Tibial artery (tissue), 4 donors: ENCODE measurements at regions of chr5 and their contacts with region 1.

Region 1: DNA sequence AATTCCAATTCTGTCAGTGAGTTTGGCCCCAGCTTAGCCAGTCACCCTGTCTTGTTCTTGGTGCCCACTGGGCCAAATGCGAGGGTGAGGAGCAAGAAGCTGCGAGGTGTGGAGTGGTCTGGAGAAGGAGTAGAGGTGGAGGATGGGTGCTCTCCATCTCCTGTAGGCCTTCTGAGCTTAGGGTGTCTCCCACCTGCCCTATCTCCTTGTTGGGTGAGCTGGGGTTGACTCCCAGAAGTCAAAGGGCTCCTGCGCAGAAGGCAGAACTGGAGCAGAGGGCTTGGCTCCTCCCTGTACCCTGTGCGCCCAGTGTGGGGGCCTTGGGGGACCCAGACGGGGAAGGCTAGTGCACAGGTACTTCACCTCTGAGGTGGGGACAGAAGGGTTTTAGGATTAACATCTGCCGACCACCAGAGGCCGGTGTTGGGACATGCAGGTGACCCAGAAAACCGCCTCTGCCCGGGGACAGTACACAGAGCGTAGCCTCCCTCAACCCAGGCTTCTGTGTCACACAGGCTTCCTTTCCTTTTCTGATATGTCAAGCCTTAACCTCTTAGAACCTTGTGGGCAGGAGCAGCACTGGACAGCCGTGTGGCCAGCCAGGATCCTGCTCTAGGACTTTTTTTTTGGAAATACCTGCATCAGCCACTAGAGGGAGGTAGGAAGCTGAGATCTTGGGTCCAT is 16.9 kb downstream of the IL5 start:
- DNase-seq: no peak
- H3K4me3 ChIP-seq: no peak overlapping the region
- H3K27ac ChIP-seq: no peak overlapping the region
- H3K4me1 ChIP-seq: peaks cover 0 to 6% (median 2%) of the 10 kb centered on the region in 4 donors
- H3K27me3 ChIP-seq: no peaks in the 10 kb centered on the region
- CTCF ChIP-seq: peak; percentile 76 to 84

Region 2: GRCh38 chr5:132437604-132438266 is 88.7 kb before region 1 on chr5:
- intact Hi-C with region 1: no loop called
- DNase-seq: peak; percentile 84
- H3K4me3 ChIP-seq: no peak overlapping the region
- H3K27ac ChIP-seq: peak overlapping the region; percentile 50 to 68
- H3K4me1 ChIP-seq: peaks cover 0 to 65% (median 35%) of the 10 kb centered on the region in 4 donors
- H3K27me3 ChIP-seq: no peaks in the 10 kb centered on the region
- CTCF ChIP-seq: no peak

Region 3: GRCh38 chr5:132674671-132675506 is 148.5 kb after region 1 on chr5:
- intact Hi-C with region 1: loop called (anchors 10 kb)
- DNase-seq: peak in 1 of 2 donors; percentile 68
- H3K4me3 ChIP-seq: peak overlapping the region; percentile 20 to 27
- H3K27ac ChIP-seq: peak overlapping the region; percentile 57 to 82
- H3K4me1 ChIP-seq: peaks cover 0 to 46% (median 23%) of the 10 kb centered on the region in 4 donors
- H3K27me3 ChIP-seq: no peaks in the 10 kb centered on the region
- CTCF ChIP-seq: no peak